K562 (cell line): ENCODE measurements at regions of chr9 and their contacts with region 1.

Region 1: GRCh38 chr9:129131300-129132145 is 20.3 kb downstream of the PTPA start:
- DNase-seq: peak; percentile 83 to 89 (median 84)
- ATAC-seq: peak; percentile 99
- H3K4me3 ChIP-seq: no peak overlapping the region
- H3K27ac ChIP-seq: no peak overlapping the region
- H3K4me1 ChIP-seq: peaks cover 0 to 9% of the 10 kb centered on the region in 2 experiments; a peak in 2 of 5 replicates
- H3K27me3 ChIP-seq: no peaks in the 10 kb centered on the region
- CTCF ChIP-seq: peak; percentile 93 to 98 (median 95)
- EP300 ChIP-seq: 0 out of 2 replicates have a peak, but pooled peaks have one; percentile 21
- POLR2A ChIP-seq: no peak
- RAD21 ChIP-seq: peak; percentile 77 to 84

Region 2: DNA sequence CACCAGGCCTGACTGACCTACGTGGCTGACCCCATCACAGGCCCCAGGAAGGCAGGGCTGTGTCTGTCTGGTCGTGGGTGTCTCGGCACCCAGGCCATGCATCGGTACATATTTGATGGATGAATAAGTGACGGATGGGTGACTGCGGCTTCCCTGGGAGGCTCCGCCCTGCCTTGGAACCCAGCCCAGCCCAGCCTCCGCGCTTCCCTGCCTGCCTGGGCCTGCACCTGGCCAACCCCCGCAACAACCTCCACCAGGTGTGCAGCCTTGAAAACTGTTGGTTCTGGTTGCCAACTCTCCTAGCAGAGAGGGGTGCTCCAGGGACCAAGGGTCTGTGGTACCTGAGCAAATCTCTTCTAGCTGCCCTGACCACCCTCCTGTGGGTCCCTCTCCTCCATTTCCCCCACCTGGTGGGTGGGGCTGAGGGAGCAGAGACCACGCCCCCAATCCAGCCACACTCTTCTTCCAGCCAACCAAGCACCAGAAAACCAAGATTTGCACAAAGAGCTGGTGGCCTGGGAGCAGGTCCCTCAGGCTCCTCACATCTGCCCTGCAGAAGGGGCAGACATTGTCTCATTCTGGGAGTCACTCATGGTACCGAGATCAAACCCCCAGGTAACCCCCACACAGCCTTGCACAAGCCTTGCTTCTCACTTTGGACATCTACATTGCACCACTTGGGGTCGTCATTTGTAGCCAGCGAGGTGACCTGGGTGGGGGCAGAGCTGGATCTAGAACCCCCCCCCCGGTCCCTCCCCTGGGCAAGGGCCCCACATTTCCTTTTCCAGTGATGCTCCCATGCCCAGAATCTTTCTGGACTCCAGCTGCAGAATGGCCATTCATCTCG is 147.1 kb after region 1 on chr9:
- CTCF ChIA-PET with region 1: no interaction called
- POLR2A ChIA-PET with region 1: no interaction called
- in situ Hi-C with region 1: no loop called
- intact Hi-C with region 1: no loop called
- DNase-seq: peak; percentile 34 to 54 (median 44)
- ATAC-seq: peak; percentile 78
- H3K4me3 ChIP-seq: no peak overlapping the region
- H3K27ac ChIP-seq: no peak overlapping the region
- H3K4me1 ChIP-seq: peaks cover 0 to 27% of the 10 kb centered on the region in 2 experiments; a peak in 3 of 5 replicates
- H3K27me3 ChIP-seq: peaks cover 11 to 30% of the 10 kb centered on the region in 2 experiments; a peak in 4 of 5 replicates
- CTCF ChIP-seq: no peak
- EP300 ChIP-seq: no peak
- POLR2A ChIP-seq: no peak
- RAD21 ChIP-seq: no peak

Region 3: GRCh38 chr9:129617167-129617566 is 485.6 kb after region 1 on chr9:
- CTCF ChIA-PET with region 1: no interaction called
- POLR2A ChIA-PET with region 1: interaction called, 5 read pairs
- in situ Hi-C with region 1: loop called (anchors 5 kb)
- intact Hi-C with region 1: no loop called
- DNase-seq: peak in 1 of 4 experiments; percentile 39
- ATAC-seq: peak; percentile 56
- H3K4me3 ChIP-seq: no peak overlapping the region
- H3K27ac ChIP-seq: no peak overlapping the region
- H3K4me1 ChIP-seq: peaks cover 0 to 32% of the 10 kb centered on the region in 2 experiments; a peak in 4 of 5 replicates
- H3K27me3 ChIP-seq: peaks cover 7 to 49% of the 10 kb centered on the region in 2 experiments; a peak in 4 of 5 replicates
- CTCF ChIP-seq: peak; percentile 57 to 64 (median 61)
- EP300 ChIP-seq: no peak
- POLR2A ChIP-seq: no peak
- RAD21 ChIP-seq: peak in 1 of 2 experiments; percentile 62; a peak in 3 of 4 replicates